PC-3 (cell line): ENCODE measurements at regions of chr18 and their contacts with region 1.

Region 1: DNA sequence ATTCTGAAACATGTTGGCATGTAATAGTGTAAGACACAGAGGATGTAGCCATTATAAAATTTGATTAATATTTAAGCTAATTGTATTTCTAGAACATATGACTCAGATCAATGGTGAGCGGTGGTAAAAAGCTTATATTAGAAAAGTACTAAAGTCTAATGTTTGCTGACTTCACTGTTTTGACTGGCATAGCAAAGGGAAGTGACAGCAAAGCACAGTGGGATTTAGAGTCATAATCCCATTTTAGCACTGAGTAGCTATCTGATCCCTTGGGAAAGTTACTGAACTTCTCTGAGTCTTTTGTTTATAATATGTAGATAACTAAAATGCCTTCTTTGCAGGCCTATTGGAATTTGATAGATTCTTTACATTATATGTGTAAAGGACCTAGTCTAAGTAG is 60.4 kb downstream of the KIAA1328 start:
- DNase-seq: no peak
- ATAC-seq: no peak
- H3K4me3 ChIP-seq: no peak overlapping the region
- H3K27ac ChIP-seq: no peak overlapping the region
- H3K4me1 ChIP-seq: no peaks in the 10 kb centered on the region
- H3K27me3 ChIP-seq: no peaks in the 10 kb centered on the region
- CTCF ChIP-seq: no peak

Region 2: GRCh38 chr18:36365836-36366775 is 523.2 kb before region 1 on chr18:
- CTCF ChIA-PET with region 1: no interaction called
- POLR2A ChIA-PET with region 1: no interaction called
- intact Hi-C with region 1: no loop called
- DNase-seq: no peak
- ATAC-seq: no peak
- H3K4me3 ChIP-seq: no peak overlapping the region
- H3K27ac ChIP-seq: no peak overlapping the region
- H3K4me1 ChIP-seq: no peaks in the 10 kb centered on the region
- H3K27me3 ChIP-seq: no peaks in the 10 kb centered on the region
- CTCF ChIP-seq: no peak

Region 3: GRCh38 chr18:36769611-36770314 is 119.6 kb before region 1 on chr18:
- CTCF ChIA-PET with region 1: no interaction called
- POLR2A ChIA-PET with region 1: no interaction called
- intact Hi-C with region 1: no loop called
- DNase-seq: no peak
- ATAC-seq: no peak
- H3K4me3 ChIP-seq: no peak overlapping the region
- H3K27ac ChIP-seq: no peak overlapping the region
- H3K4me1 ChIP-seq: no peaks in the 10 kb centered on the region
- H3K27me3 ChIP-seq: no peaks in the 10 kb centered on the region
- CTCF ChIP-seq: no peak

Region 4: DNA sequence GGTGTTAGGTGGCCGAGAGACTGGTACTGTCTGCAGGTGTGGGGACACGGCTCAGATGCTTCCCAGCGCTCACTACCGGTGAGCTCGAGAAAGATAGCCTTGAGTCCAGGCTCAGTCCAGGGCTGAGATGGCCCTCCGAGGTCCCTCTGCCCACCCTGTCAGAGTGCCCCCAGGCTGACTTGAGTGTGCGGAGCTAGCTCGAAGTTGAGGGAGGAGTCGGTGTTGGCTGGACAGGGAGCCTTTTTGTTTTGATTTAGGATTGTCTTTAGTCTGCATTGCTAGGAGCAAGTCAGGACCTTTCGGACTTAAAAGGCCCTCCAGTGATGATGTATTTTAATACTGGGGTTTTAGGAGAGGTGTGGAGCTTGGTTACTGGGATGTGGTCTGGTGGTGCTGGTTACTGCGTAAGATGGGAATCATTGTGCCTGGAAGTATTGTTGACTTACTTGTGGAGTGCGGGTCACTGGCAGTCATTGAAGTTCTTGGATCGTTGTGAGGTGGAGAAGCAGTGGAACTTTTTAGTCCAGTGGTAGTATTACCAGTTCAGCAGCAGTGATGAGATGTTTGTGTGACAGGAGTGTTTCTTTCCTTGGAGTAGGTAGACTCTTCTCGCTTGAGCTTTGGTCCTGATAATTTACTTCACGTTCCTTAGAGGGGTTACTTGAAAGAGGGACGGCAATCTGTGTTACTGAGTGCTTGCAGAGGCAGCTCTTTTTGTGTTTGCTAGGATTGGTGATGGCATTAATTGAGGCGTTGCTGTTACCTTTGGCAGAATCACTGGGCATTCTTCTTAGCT is 59.8 kb before region 1 on chr18:
- CTCF ChIA-PET with region 1: no interaction called
- POLR2A ChIA-PET with region 1: no interaction called
- intact Hi-C with region 1: loop called (anchors 10 kb)
- DNase-seq: peak; percentile 11
- ATAC-seq: peak; percentile 5
- H3K4me3 ChIP-seq: peak overlapping the region; percentile 84
- H3K27ac ChIP-seq: peak overlapping the region; percentile 44
- H3K4me1 ChIP-seq: peaks cover 14% of the 10 kb centered on the region; the same call in 1 of the 2 replicates
- H3K27me3 ChIP-seq: no peaks in the 10 kb centered on the region
- CTCF ChIP-seq: no peak; the same call in 1 of the 2 replicates

Region 5: DNA sequence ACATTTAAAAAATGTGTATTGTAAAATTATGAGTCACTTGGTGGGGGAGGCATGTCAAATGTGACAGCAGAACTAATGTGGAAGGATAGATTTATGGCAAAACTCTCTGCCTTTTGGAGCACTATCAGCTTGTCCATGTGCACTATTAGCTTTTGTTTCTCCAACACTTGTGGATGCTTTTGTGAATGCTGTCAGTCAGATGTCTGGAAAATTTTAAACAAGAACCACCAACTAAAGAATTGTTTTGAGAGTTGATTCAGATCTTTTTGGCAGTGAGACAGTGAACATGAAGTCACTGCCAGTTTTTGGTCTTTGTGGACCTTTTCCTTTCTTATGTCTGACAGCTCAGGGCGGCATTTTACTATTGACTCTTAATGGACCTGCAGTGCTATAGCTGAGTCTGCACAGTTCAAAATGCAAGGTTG is 12.0 kb after region 1 on chr18:
- CTCF ChIA-PET with region 1: no interaction called
- POLR2A ChIA-PET with region 1: no interaction called
- intact Hi-C with region 1: no loop called
- DNase-seq: peak; percentile 27
- ATAC-seq: peak; percentile 73
- H3K4me3 ChIP-seq: no peak overlapping the region
- H3K27ac ChIP-seq: no peak overlapping the region
- H3K4me1 ChIP-seq: peaks cover 15% of the 10 kb centered on the region
- H3K27me3 ChIP-seq: no peaks in the 10 kb centered on the region
- CTCF ChIP-seq: no peak

Region 6: DNA sequence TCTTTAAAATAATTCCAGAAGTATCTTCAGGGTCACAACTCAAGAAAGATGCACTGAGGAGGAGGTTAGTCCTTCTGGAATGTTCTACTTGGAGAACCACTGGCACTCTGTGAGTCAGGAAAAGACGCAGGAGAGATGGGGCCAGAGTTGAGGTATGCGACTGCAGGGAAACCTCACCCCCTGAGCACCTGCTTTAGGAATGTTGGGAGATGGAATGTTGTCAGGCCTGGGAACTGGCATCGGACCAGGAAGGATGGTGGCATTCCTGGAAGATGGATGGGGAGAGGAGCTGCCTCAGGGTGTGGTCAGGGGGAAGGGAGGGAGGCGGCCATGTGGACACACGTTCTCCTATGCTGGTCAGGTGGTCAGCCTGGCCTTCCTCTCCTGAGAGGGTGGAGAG is 530.0 kb after region 1 on chr18:
- CTCF ChIA-PET with region 1: no interaction called
- POLR2A ChIA-PET with region 1: no interaction called
- intact Hi-C with region 1: no loop called
- DNase-seq: peak; percentile 30
- ATAC-seq: no peak
- H3K4me3 ChIP-seq: no peak overlapping the region
- H3K27ac ChIP-seq: no peak overlapping the region
- H3K4me1 ChIP-seq: no peaks in the 10 kb centered on the region
- H3K27me3 ChIP-seq: no peaks in the 10 kb centered on the region
- CTCF ChIP-seq: no peak